Right ventricle myocardium inferior (tissue), 1 donor: ENCODE measurements at regions of chr3 and their contacts with region 1.

Region 1: GRCh38 chr3:58101499-58102389 is 93.5 kb downstream of the FLNB start:
- DNase-seq: no peak
- ATAC-seq: no peak

Region 2: GRCh38 chr3:57538452-57538851 is 563.3 kb before region 1 on chr3:
- intact Hi-C with region 1: no loop called
- DNase-seq: no peak
- ATAC-seq: no peak

Region 3: DNA sequence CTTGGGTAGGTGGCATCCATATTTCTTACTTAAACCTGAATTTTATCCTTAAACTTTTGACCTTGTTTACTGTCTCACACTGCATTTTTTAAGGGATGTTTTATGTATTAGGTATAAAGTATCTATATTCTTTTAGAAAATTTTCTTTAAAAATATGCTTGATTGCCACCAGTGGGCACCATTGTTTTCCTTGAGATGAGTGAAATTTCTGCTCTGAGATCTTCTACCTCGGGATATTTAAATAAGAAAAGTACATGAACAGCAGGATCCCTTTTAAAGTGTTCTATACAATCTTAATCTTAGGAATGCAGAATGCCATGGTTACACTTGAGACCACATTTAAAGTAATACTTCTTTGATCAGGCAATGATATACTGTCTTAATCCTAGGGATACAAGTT is 236.9 kb before region 1 on chr3:
- intact Hi-C with region 1: loop called (anchors 10 kb)
- DNase-seq: no peak
- ATAC-seq: no peak

Region 4: DNA sequence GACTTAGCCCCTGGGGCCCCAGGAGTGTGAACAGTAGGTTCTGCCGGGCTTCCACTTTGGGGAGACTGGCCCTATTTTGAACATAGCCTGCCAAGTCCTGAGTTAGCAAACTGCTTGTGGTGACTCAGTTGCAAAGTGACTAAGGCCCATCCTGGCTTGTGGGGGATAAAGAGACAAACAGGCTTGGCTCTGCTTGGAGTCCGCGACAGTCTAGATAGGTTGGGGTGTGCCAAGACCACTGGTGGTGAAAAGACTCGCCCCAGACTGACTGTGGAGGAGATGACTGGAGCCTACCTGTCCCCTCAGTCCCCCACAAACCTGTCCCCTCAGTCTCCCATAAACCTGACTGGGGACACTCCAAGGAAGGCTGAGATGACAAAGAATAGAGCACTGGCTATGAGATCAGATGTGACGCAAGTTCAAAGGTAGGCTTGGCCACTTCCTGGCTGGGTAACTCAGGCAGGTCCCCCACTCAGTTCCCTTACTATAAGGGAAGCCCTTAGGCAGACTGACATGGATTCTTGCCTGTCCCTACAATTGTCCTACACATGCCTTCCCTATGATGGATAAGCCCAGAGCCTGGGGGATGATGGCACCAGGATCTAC is 104.8 kb after region 1 on chr3:
- intact Hi-C with region 1: no loop called
- DNase-seq: no peak
- ATAC-seq: no peak